Panc1 (cell line): ENCODE measurements at regions of chr5 and their contacts with region 1.

Region 1: DNA sequence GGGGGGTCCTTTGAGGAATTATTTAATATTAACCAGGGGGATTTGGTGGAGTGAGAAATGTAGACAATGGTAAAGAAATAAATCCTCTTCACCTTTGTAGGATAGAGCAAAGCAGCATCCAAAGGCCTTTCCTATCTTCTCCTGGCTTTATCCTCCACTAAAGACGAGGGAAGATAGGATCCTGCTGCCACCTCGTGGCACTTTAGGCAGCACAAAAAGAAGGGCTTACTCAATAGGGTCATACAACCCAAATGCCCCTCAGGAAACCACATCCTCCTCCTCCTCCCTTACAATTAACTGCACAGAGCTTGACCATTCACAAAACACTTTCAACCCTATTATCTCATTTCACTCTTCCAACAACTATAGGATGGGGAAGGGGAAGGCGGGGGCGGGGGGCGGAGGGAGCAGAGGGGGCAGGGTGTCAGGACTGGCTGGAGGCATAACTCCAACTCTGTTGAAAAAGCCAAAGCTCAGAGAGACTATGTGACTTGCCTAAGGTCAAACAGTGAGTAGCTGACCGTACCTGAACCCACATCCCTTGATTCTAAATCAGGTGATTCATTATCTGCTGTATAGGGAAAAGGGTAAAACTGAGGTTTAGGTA is 45.4 kb upstream of the MYOT start:
- DNase-seq: peak; percentile 27
- ATAC-seq: peak; percentile 91
- H3K4me3 ChIP-seq: no peak overlapping the region
- H3K27ac ChIP-seq: no peak overlapping the region
- H3K4me1 ChIP-seq: no peaks in the 10 kb centered on the region; the same call in 1 of the 2 replicates
- H3K27me3 ChIP-seq: no peaks in the 10 kb centered on the region; the same call in 1 of the 2 replicates
- CTCF ChIP-seq: peak; percentile 76

Region 2: GRCh38 chr5:137629646-137630045 is 192.6 kb before region 1 on chr5:
- CTCF ChIA-PET with region 1: no interaction called
- POLR2A ChIA-PET with region 1: no interaction called
- in situ Hi-C with region 1: no loop called
- intact Hi-C with region 1: loop called (anchors 2 kb)
- DNase-seq: peak; percentile 25
- ATAC-seq: peak; percentile 83
- H3K4me3 ChIP-seq: no peak overlapping the region
- H3K27ac ChIP-seq: no peak overlapping the region
- H3K4me1 ChIP-seq: no peaks in the 10 kb centered on the region; the same call in 1 of the 2 replicates
- H3K27me3 ChIP-seq: no peaks in the 10 kb centered on the region
- CTCF ChIP-seq: peak; percentile 85

Region 3: GRCh38 chr5:137754126-137754960 is 67.9 kb before region 1 on chr5 and contains the start of gene HNRNPA0:
- CTCF ChIA-PET with region 1: no interaction called
- POLR2A ChIA-PET with region 1: no interaction called
- in situ Hi-C with region 1: no loop called
- intact Hi-C with region 1: loop called (anchors 2 kb)
- DNase-seq: peak; percentile 88
- ATAC-seq: peak; percentile 95
- H3K4me3 ChIP-seq: peak within 1 kb of the TSS; percentile 93 to 98
- H3K27ac ChIP-seq: peak within 1 kb of the TSS; percentile 98
- H3K4me1 ChIP-seq: peaks cover 13% of the 10 kb centered on the region
- H3K27me3 ChIP-seq: no peaks in the 10 kb centered on the region
- CTCF ChIP-seq: no peak
- total RNA-seq, gene HNRNPA0: 33.3 TPM

Region 4: GRCh38 chr5:137778772-137779564 is 43.3 kb before region 1 on chr5:
- CTCF ChIA-PET with region 1: interaction called, 11 read pairs
- POLR2A ChIA-PET with region 1: no interaction called
- in situ Hi-C with region 1: no loop called
- intact Hi-C with region 1: loop called (anchors 1 kb)
- DNase-seq: peak; percentile 27
- ATAC-seq: no peak; the same call in 1 of the 2 replicates
- H3K4me3 ChIP-seq: no peak overlapping the region
- H3K27ac ChIP-seq: no peak overlapping the region
- H3K4me1 ChIP-seq: no peaks in the 10 kb centered on the region
- H3K27me3 ChIP-seq: peaks cover 3% of the 10 kb centered on the region; the same call in 1 of the 2 replicates
- CTCF ChIP-seq: peak; percentile 78; the same call in 1 of the 2 replicates